Activated CD8-positive, alpha-beta T cell treated with anti-CD3 and anti-CD28 coated beads for 36 hours (primary cell): ENCODE measurements at regions of chr4 and their contacts with region 1.

Region 1: GRCh38 chr4:48906206-48907173 is at the start of gene OCIAD2:
- DNase-seq: peak; percentile 91
- ATAC-seq: peak; percentile 74
- H3K4me3 Mint-ChIP-seq: peak within 1 kb of the TSS; percentile 77
- H3K27ac Mint-ChIP-seq: peak within 1 kb of the TSS; percentile 91
- H3K4me1 Mint-ChIP-seq: peaks cover 49% of the 10 kb centered on the region
- H3K27me3 Mint-ChIP-seq: no peaks in the 10 kb centered on the region
- CTCF ChIP-seq: peak; percentile 5
- total RNA-seq, gene OCIAD2: 65.1 to 82.7 TPM

Region 2: DNA sequence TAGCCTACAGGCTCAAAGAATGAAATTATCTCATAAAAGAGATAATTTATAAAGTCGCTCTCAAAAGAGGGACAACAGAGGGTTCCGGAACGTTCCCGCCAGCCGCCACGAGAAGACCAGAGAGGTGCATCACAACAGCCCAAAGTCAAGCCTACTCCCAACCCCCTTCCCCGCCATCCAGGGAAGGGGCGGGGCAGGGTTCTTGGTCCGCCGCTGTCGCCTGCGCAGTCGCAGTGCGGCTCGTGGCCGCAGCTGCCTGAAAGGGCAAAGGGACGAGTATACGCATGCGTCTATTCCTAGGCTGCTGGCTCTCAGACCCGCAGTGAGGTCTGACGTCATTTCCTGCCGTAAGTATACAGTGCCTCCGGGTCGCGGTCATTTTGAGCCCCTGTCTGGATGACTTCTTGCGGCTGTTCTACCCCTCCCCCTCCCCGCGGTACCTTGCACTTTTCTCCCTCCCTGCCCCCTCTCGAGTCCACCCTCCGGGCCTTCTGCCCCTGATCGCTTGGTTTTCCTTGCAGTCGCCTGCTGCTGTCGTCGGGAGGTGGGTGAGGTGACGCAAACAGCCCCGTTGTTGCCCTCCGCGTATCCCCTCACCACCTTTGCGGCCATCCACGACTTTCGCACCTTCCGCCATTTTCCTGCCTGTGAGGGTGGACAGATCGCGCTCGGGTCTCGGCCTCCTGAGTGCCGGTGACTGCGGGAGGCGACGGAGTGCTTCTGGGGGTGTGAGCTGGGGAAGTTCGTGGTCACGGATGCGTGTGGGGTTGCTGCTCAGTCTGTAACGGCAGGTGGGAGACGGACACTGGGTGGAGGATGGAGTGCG is 75.6 kb before region 1 on chr4 and contains the start of gene OCIAD1:
- CTCF ChIA-PET with region 1: no interaction called
- POLR2A ChIA-PET with region 1: no interaction called
- intact Hi-C with region 1: loop called (anchors 5 kb)
- DNase-seq: peak; percentile 98
- ATAC-seq: peak; percentile 97
- H3K4me3 Mint-ChIP-seq: peak within 1 kb of the TSS; percentile 94
- H3K27ac Mint-ChIP-seq: peak within 1 kb of the TSS; percentile 100
- H3K4me1 Mint-ChIP-seq: peaks cover 25% of the 10 kb centered on the region
- H3K27me3 Mint-ChIP-seq: no peaks in the 10 kb centered on the region
- CTCF ChIP-seq: no peak
- total RNA-seq, gene OCIAD1: 103 to 106 TPM

Region 3: DNA sequence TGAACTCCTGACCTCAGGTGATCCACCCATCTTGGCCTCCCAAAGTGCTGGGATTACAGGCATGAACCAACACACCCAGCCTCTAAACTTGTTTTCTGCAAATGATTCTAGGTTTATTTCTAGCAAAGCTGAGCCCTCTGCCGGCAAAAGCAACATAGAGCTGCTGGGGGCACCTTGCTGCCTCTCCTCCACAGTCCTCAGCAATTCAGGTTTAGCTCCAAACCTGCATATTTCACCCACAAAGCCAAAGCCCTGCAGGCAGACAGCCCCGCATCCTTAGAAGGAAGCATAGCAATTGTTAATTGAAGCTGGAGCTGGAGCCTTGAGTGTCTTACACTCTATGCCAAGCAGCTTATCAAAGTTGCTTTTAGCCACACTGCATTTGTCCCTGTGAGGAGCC is 25.0 kb after region 1 on chr4:
- CTCF ChIA-PET with region 1: no interaction called
- POLR2A ChIA-PET with region 1: no interaction called
- intact Hi-C with region 1: no loop called
- DNase-seq: no peak
- ATAC-seq: no peak
- H3K4me3 Mint-ChIP-seq: no peak overlapping the region
- H3K27ac Mint-ChIP-seq: no peak overlapping the region
- H3K4me1 Mint-ChIP-seq: no peaks in the 10 kb centered on the region
- H3K27me3 Mint-ChIP-seq: no peaks in the 10 kb centered on the region
- CTCF ChIP-seq: no peak